Right ventricle myocardium superior (tissue), 1 donor: ENCODE measurements at regions of chr6 and their contacts with region 1.

Region 1: GRCh38 chr6:89432875-89433251 is at the start of gene ANKRD6:
- DNase-seq: peak; percentile 90
- ATAC-seq: peak; percentile 98
- total RNA-seq, gene ANKRD6: 15.0 TPM

Region 2: GRCh38 chr6:89610149-89610642 is 177.3 kb after region 1 on chr6:
- intact Hi-C with region 1: loop called (anchors 2 kb)
- DNase-seq: peak; percentile 82
- ATAC-seq: peak; percentile 82